ENCODE measurements at regions of chr6 and their contacts with region 1.

Region 1: GRCh38 chr6:137165375-137166246 is 7.8 kb downstream of the IL22RA2 start:
- DNase-seq: peak; percentile 45
- H3K27ac ChIP-seq: no peak overlapping the region
- CTCF ChIP-seq: peak; percentile 44

Region 2: DNA sequence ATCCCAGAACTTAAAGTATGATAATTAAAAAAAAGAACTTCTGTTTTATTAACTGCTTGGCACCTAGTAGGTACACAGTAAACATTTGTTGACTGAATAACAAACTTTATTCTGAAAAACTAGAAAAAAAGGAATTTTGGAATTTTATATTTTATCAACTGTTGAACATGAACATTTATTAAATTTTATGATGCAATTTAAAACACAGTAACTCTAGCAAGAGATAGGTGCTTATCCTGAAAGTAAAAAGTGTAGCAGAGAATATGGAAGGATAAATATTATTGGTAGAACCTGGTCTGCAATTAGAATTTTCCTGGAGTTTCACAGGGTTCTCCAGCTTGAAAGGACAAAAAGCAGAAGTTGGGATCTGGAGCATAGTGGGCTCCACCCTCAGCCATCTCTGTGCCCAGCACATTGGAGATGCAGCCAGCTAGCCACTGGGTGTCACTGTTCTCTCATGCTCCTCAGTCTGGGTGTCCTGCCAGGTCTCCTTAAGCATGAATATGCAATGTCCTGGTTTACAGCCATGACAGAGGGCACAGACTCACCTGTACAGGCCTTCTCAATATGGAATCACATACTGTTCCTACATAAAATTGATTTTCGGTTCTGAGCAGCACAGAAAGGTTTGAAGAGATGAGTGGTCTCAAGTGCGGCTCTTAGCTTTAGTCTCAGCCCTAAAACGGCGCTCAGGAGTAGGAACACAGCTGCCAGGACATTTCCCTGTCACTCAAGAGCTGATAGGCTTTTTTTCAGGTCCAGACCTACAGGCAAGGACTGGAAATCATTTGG is 89.1 kb before region 1 on chr6:
- CTCF ChIA-PET with region 1: interaction called, 10 read pairs
- POLR2A ChIA-PET with region 1: no interaction called
- DNase-seq: peak; percentile 59
- H3K27ac ChIP-seq: no peak overlapping the region
- CTCF ChIP-seq: peak; percentile 69